ENCODE measurements at regions of chr12 and their contacts with region 1.

Region 1: DNA sequence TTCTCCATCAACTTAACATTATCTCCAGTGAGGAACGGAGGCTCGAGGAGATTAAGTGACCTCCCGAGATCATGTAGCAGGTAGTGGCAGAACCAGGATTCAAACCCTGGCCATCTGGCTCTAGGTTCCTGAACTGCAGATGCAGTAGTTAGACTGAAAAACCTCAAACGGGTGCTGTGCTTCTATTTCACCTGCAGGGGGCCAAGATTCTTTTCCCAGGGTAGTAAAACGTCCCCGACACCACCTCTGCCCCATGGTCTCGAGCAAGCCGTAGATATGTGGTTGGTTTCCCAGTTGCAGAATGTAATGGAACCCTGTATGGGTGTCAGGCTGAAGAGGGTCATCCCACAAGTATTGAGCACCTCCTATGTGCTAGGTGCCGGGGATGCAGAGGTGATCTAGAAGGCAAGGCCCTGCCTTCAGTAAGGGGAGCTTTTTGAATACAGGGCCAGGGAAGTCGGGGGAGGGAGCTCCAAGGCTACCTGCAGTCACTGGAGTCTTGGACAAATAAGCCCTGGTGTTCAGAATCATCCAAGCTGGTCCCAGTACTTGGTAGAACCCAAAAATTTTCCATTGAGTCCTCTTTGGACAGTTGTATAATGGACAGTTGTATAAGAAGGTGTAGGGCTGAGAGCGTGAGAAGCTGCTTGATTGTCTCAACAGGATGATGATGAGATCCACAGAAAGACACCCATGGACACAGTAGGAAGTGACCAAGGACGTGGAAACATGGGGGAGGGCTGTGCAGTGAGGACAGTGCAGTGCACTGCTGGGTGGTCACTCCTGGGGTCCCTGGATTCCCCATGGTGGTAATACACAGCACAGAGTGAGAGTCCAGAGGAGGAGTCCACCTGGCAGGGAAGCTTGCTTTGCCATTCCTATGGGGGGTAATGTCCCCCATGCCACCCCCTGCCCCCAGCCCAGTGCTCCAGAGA is 197.2 kb downstream of the CHST11 start:
- DNase-seq: no peak
- H3K4me3 ChIP-seq: no peak overlapping the region
- H3K27ac ChIP-seq: no peak overlapping the region
- H3K4me1 ChIP-seq: peaks cover 0 to 24% of the 10 kb centered on the region in 2 donors
- H3K27me3 ChIP-seq: no peaks in the 10 kb centered on the region
- CTCF ChIP-seq: no peak
- POLR2A ChIP-seq: no peak

Region 2: GRCh38 chr12:104177663-104178501 is 476.1 kb before region 1 on chr12:
- intact Hi-C with region 1: no loop called
- DNase-seq: peak; percentile 77 to 96 (median 93)
- H3K4me3 ChIP-seq: no peak overlapping the region
- H3K27ac ChIP-seq: peak overlapping the region; percentile 35 to 84 (median 75)
- H3K4me1 ChIP-seq: peaks cover 38 to 52% of the 10 kb centered on the region in 2 donors
- H3K27me3 ChIP-seq: no peaks in the 10 kb centered on the region
- CTCF ChIP-seq: peak in 5 of 6 experiments; percentile 25 to 44 (median 40)
- POLR2A ChIP-seq: peak in 1 of 2 donors; percentile 46

Region 3: DNA sequence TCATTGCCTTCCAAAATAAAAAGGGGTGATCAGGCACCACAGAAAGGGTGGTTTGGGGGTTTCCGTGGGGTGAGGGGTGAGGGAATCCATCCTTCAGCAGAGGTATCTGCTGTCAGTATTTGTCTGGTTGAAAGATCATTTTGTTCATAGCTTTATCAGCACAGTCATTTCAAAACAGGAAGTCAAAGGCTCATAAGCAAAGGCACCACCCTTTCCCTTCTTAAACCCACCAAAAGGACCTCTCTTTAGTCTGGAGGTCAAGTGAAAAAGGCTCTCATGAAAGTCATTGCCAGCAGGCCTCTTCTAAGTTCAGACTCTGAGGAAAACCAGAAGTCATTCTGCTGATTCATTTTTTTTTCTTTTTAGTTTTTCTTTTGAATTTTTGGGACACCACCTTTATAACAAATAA is 191.1 kb before region 1 on chr12:
- intact Hi-C with region 1: loop called in 1 of 2 experiments (anchors 10 kb)
- DNase-seq: no peak
- H3K4me3 ChIP-seq: no peak overlapping the region
- H3K27ac ChIP-seq: peak overlapping the region in 2 of 5 donors; percentile 18 to 62
- H3K4me1 ChIP-seq: peaks cover 11 to 62% of the 10 kb centered on the region in 2 donors
- H3K27me3 ChIP-seq: no peaks in the 10 kb centered on the region
- CTCF ChIP-seq: no peak
- POLR2A ChIP-seq: no peak